ENCODE measurements at regions of chr3 and their contacts with region 1.

Region 1: DNA sequence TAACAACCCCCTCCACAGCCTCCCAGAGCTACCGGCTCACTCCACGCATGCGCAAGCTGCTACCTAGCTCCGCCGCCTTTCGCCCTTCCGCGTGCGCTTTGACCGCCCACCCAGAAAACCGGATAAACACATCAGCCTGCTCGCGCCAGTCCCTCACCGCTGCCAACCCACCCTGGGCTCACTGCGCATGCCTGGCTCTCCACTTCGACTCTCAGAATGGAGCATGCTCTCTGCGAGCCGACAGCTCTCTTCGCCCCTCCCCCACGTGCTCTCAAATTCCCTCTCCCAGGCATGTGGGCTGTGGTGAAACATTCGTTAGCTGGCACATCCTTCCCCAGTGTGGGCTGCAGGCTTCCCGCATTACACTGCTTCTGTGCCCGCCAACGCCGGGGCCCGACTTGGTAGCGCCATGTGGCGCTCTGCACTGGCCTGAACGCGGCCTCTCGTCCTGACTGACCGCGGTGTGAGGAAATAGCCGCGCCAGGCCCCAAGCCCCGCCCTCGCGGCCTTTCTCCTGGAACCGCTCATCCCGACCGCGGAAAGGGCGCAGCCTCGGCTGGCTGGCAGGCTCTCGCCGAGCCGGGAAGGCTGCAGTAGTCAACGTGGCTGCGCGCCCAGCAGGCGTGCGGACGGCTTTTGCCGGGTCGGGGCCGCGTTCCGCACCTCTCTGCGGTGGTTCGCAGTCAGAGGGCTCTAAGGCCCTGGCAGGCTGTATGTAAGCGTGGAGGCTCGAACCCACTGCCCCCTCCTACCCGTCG is 445 bp upstream of the MSL2 start:
- DNase-seq: peak; percentile 99 to 100
- ATAC-seq: peak; percentile 85 to 88 (median 86)
- H3K4me3 ChIP-seq: peak overlapping the region; percentile 99
- H3K27ac ChIP-seq: peak overlapping the region; percentile 100
- H3K4me1 ChIP-seq: peaks cover 29% of the 10 kb centered on the region
- H3K27me3 ChIP-seq: no peaks in the 10 kb centered on the region
- CTCF ChIP-seq: no peak

Region 2: GRCh38 chr3:135965506-135966270 is 230.9 kb before region 1 on chr3 and contains the start of gene PPP2R3A:
- intact Hi-C with region 1: loop called in 1 of 2 experiments (anchors 10 kb)
- DNase-seq: peak; percentile 86 to 93
- ATAC-seq: peak; percentile 92 to 97 (median 96)
- H3K4me3 ChIP-seq: peak within 1 kb of the TSS; percentile 82
- H3K27ac ChIP-seq: peak within 1 kb of the TSS; percentile 92
- H3K4me1 ChIP-seq: peaks cover 38% of the 10 kb centered on the region
- H3K27me3 ChIP-seq: no peaks in the 10 kb centered on the region
- CTCF ChIP-seq: no peak
- total RNA-seq, gene PPP2R3A: 45.5 to 134 (median 52.6) TPM

Region 3: DNA sequence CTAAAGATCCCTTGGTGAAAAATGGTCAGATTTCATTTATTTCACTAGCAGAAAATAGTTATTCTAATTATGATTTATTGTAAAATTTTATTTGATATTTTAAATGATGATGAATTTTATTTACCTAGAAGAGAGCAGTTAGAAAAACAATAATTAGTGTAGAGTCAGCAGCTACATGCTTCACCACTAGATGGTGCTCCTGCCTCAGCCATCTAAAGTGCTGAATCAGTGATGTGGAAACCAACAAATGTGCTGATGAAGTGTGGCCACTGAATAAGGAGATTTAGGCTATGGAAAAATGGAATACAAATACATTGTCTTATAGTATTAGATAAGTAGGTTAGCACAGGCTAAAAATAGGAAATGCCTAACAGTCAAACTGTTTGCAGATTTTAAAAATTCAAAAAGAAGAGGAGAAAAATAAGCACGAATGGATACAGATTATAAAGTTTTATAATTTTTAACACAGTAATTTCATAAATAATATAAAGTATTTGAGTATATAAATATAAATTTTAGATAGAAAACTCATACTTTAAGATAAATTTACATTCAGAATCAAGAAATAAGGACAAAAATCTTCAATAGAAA is 121.3 kb before region 1 on chr3:
- intact Hi-C with region 1: loop called (anchors 5 to 10 kb)
- DNase-seq: peak; percentile 57 to 69
- ATAC-seq: peak; percentile 84 to 88 (median 85)
- H3K4me3 ChIP-seq: peak overlapping the region; percentile 13
- H3K27ac ChIP-seq: peak overlapping the region; percentile 88
- H3K4me1 ChIP-seq: peaks cover 45% of the 10 kb centered on the region
- H3K27me3 ChIP-seq: no peaks in the 10 kb centered on the region
- CTCF ChIP-seq: peak; percentile 95

Region 4: GRCh38 chr3:136142592-136142991 is 54.0 kb before region 1 on chr3:
- intact Hi-C with region 1: loop called in 1 of 2 experiments (anchors 10 kb)
- DNase-seq: no peak
- ATAC-seq: peak; percentile 34 to 54 (median 44)
- H3K4me3 ChIP-seq: no peak overlapping the region
- H3K27ac ChIP-seq: peak overlapping the region; percentile 12
- H3K4me1 ChIP-seq: peaks cover 4% of the 10 kb centered on the region
- H3K27me3 ChIP-seq: no peaks in the 10 kb centered on the region
- CTCF ChIP-seq: no peak

Region 5: DNA sequence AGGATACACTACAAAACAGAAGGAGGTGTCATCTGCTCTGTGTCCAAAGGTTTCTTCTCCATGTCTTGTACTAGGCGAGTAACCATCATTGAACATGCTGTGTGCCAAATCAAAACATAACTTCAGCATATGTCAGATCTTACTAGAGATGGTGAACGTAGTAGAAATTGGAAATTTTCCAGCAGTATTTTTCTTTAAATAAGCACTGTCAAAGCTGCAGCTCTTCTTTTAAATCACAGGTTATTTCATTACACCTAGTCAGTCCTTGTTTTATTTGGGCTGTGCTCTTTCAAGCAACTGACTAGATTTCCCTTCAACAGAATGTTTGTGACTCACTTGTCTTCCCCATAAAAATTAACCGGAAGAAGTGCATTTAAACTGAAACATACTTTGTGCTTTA is 46.9 kb before region 1 on chr3:
- intact Hi-C with region 1: loop called (anchors 5 to 10 kb)
- DNase-seq: no peak
- ATAC-seq: peak in 2 of 4 donors; percentile 46 to 66
- H3K4me3 ChIP-seq: no peak overlapping the region
- H3K27ac ChIP-seq: no peak overlapping the region
- H3K4me1 ChIP-seq: peaks cover 38% of the 10 kb centered on the region
- H3K27me3 ChIP-seq: no peaks in the 10 kb centered on the region
- CTCF ChIP-seq: no peak

Region 6: DNA sequence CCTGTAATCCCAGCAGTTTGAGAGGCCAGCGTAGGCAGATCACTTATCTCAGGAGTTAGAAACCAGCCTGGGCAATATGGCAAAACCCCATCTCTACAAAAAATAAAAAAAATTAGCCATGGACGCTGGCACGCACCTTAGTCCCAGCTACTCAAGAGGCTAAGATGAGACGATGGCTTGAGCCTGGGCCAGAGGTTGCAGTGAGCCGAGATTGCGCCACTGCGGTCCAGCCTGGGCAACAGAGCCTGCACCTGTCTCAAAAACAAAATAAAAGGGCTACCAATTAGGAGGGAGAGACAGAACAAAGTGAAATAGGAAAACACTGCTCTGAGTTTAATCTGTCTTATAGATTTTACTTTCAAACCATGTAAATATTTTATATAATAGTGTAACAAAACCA is 34.3 kb before region 1 on chr3:
- intact Hi-C with region 1: loop called in 1 of 2 experiments (anchors 5 kb)
- DNase-seq: peak; percentile 71 to 85
- ATAC-seq: peak; percentile 91 to 95 (median 93)
- H3K4me3 ChIP-seq: peak overlapping the region; percentile 19
- H3K27ac ChIP-seq: peak overlapping the region; percentile 61
- H3K4me1 ChIP-seq: peaks cover 64% of the 10 kb centered on the region
- H3K27me3 ChIP-seq: no peaks in the 10 kb centered on the region
- CTCF ChIP-seq: no peak

Region 7: GRCh38 chr3:136250226-136250902 is 53.8 kb after region 1 on chr3 and contains the start of gene PCCB:
- intact Hi-C with region 1: loop called (anchors 1 to 5 kb)
- DNase-seq: peak; percentile 94 to 97
- ATAC-seq: peak; percentile 97 to 98 (median 98)
- H3K4me3 ChIP-seq: peak within 1 kb of the TSS; percentile 73
- H3K27ac ChIP-seq: peak within 1 kb of the TSS; percentile 89
- H3K4me1 ChIP-seq: peaks cover 13% of the 10 kb centered on the region
- H3K27me3 ChIP-seq: no peaks in the 10 kb centered on the region
- CTCF ChIP-seq: peak; percentile 68
- total RNA-seq, gene PCCB: 36.4 to 60.4 (median 52.5) TPM